ENCODE measurements at regions of chr10 and their contacts with region 1.

Region 1: DNA sequence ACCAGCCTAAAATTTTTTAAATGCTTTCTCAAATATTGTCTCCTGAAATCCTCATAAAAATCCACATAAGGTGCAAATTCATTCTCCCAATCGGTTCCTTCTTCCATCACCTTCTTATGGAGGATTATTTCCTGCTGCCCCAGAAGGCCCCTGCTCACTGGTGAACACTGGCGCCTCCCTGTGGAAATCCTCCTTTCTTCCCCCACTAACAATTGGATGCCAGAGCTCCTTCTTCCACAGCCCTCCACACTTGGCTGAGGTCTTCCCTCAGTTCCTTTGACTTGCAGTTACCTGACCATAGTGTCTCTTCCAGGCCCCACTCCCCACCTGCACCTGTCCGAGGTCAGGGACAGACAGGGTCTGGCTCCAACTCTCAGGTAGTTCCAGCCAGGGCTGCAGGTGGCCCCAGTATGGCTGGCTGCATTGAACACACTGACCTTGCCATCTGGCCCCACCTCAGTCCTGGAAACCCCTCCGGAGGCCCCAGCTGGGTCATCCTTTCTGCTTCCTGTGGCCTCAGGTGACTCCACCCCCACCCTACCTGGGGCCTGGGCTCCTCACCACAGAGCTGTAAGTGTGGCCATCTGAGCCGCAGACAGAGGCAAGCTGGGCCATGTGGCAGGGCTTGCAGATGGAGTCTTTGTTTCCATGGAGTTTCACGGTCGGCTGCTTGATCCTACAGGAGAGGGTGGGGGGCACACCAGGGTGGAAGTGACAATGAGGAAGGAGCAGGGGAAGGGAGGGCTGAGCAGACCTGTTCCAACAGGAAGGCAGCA is 18.4 kb downstream of the SPOCK2 start:
- DNase-seq: peak; percentile 32
- H3K4me3 ChIP-seq: no peak overlapping the region
- H3K27ac ChIP-seq: no peak overlapping the region
- H3K4me1 ChIP-seq: peaks cover 7% of the 10 kb centered on the region
- H3K27me3 ChIP-seq: no peaks in the 10 kb centered on the region
- CTCF ChIP-seq: peak; percentile 49

Region 2: DNA sequence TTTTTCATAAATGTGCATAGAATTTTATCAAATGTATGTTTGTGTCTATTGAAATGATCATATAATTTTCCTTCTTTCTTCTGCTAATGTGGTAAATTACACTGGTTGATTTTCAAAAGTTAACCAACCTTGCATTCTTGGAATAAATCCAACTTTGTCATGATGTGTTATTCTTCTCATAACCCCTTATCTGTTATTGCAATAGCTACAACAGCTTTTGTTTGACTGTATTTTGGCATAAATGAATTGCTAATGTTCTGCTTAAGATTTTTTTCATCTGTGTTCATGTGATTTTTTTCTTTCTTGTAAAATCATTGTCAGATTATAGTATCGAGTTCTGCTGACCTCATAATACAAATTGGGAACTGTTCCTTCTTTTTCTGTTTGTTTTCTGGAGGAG is 655.6 kb before region 1 on chr10:
- CTCF ChIA-PET with region 1: interaction called, 11 read pairs
- POLR2A ChIA-PET with region 1: no interaction called
- intact Hi-C with region 1: no loop called
- DNase-seq: no peak
- H3K4me3 ChIP-seq: no peak overlapping the region
- H3K27ac ChIP-seq: no peak overlapping the region
- H3K4me1 ChIP-seq: no peaks in the 10 kb centered on the region
- H3K27me3 ChIP-seq: no peaks in the 10 kb centered on the region
- CTCF ChIP-seq: no peak

Region 3: GRCh38 chr10:72206511-72207229 is 136.7 kb after region 1 on chr10:
- CTCF ChIA-PET with region 1: no interaction called
- POLR2A ChIA-PET with region 1: interaction called, 14 read pairs
- intact Hi-C with region 1: no loop called
- DNase-seq: no peak
- H3K4me3 ChIP-seq: no peak overlapping the region
- H3K27ac ChIP-seq: no peak overlapping the region
- H3K4me1 ChIP-seq: no peaks in the 10 kb centered on the region
- H3K27me3 ChIP-seq: no peaks in the 10 kb centered on the region
- CTCF ChIP-seq: no peak

Region 4: GRCh38 chr10:72740528-72740927 is 670.6 kb after region 1 on chr10:
- CTCF ChIA-PET with region 1: no interaction called
- POLR2A ChIA-PET with region 1: no interaction called
- intact Hi-C with region 1: no loop called
- DNase-seq: peak; percentile 83
- H3K4me3 ChIP-seq: no peak overlapping the region
- H3K27ac ChIP-seq: no peak overlapping the region
- H3K4me1 ChIP-seq: peaks cover 19% of the 10 kb centered on the region
- H3K27me3 ChIP-seq: no peaks in the 10 kb centered on the region
- CTCF ChIP-seq: no peak

Measured in A673 (cell line).